ENCODE measurements at regions of chr21 and their contacts with region 1.

Region 1: GRCh38 chr21:46228345-46229051 is at the start of gene LSS:
- DNase-seq: peak; percentile 96 to 100 (median 98)
- ATAC-seq: peak; percentile 97
- H3K4me3 ChIP-seq: peak within 1 kb of the TSS; percentile 81 to 88
- H3K4me3 Mint-ChIP-seq: peak within 1 kb of the TSS; percentile 93
- H3K27ac ChIP-seq: peak within 1 kb of the TSS; percentile 55 to 58
- H3K27ac Mint-ChIP-seq: peak within 1 kb of the TSS; percentile 91
- H3K4me1 ChIP-seq: peaks cover 25% of the 10 kb centered on the region
- H3K4me1 Mint-ChIP-seq: peaks cover 49% of the 10 kb centered on the region
- H3K27me3 ChIP-seq: no peaks in the 10 kb centered on the region
- H3K27me3 Mint-ChIP-seq: no peaks in the 10 kb centered on the region
- CTCF ChIP-seq: no peak
- total RNA-seq, gene LSS: 22.5 to 22.6 TPM

Region 2: GRCh38 chr21:45973659-45974072 is 254.8 kb before region 1 on chr21:
- CTCF ChIA-PET with region 1: interaction called, 3 read pairs
- POLR2A ChIA-PET with region 1: no interaction called
- intact Hi-C with region 1: loop called in 1 of 2 experiments (anchors 2 kb)
- DNase-seq: peak; percentile 64 to 91 (median 85)
- ATAC-seq: peak; percentile 92
- H3K4me3 ChIP-seq: peak overlapping the region; percentile 64 to 87
- H3K4me3 Mint-ChIP-seq: peak overlapping the region; percentile 86
- H3K27ac ChIP-seq: peak overlapping the region in 1 of 2 experiments; percentile 40
- H3K27ac Mint-ChIP-seq: peak overlapping the region; percentile 74
- H3K4me1 ChIP-seq: peaks cover 27% of the 10 kb centered on the region
- H3K4me1 Mint-ChIP-seq: peaks cover 13% of the 10 kb centered on the region
- H3K27me3 ChIP-seq: peaks cover 0 to 36% of the 10 kb centered on the region in 2 experiments
- H3K27me3 Mint-ChIP-seq: peaks cover 19% of the 10 kb centered on the region
- CTCF ChIP-seq: peak; percentile 83

Region 3: DNA sequence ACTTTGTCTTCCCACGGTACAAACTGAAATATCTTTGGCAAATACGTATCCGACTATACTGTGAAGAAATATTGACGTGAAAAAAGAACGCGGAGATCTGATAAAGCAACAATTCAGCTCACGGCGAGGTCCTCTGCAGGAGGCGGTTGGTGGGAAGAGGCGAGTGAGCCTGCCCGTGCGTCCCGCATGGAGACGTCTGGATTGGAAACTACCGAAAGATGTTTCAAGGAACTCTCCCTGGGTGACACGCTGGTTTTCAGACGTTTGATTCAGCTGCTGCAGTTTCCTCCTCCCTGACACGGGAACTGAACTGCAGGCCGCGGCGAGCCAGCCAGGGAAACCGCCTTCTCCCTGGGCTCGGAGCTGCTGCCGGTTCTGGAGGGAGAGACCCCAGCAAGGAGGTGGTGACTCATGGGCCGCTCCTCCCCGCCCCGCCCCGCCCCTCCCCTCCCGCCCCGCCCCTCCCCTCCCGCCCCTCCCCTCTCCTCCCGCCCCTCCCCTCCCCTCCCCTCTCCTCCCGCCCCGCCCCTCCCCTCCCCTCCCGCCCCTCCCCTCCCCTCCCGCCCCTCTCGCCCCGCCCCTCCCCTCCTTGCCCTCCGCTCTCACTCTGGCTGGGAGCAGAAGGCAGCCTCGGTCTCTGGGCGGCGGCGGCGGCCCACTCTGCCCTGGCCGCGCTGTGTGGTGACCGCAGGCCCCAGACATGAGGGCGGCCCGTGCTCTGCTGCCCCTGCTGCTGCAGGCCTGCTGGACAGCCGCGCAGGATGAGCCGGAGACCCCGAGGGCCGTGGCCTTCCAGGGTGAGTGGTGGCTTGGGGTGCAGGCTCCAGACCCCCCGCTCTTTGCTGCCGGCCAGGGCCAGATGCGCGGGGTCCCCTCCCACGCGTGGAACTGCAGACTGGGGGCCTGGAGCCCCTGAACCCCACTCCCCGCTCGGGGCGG is 247.1 kb before region 1 on chr21 and contains the start of gene COL6A1:
- CTCF ChIA-PET with region 1: no interaction called
- POLR2A ChIA-PET with region 1: no interaction called
- intact Hi-C with region 1: loop called (anchors 1 to 5 kb)
- DNase-seq: peak in 8 of 9 experiments; percentile 38 to 80 (median 70)
- ATAC-seq: peak; percentile 78
- H3K4me3 ChIP-seq: peak within 1 kb of the TSS; percentile 42 to 54
- H3K4me3 Mint-ChIP-seq: peak within 1 kb of the TSS; percentile 61
- H3K27ac ChIP-seq: no peak within 1 kb of the TSS
- H3K27ac Mint-ChIP-seq: no peak within 1 kb of the TSS
- H3K4me1 ChIP-seq: peaks cover 17% of the 10 kb centered on the region
- H3K4me1 Mint-ChIP-seq: peaks cover 6% of the 10 kb centered on the region
- H3K27me3 ChIP-seq: peaks cover 0 to 11% of the 10 kb centered on the region in 2 experiments
- H3K27me3 Mint-ChIP-seq: peaks cover 3% of the 10 kb centered on the region
- CTCF ChIP-seq: no peak
- total RNA-seq, gene COL6A1: 15.2 to 16.5 TPM

Region 4: DNA sequence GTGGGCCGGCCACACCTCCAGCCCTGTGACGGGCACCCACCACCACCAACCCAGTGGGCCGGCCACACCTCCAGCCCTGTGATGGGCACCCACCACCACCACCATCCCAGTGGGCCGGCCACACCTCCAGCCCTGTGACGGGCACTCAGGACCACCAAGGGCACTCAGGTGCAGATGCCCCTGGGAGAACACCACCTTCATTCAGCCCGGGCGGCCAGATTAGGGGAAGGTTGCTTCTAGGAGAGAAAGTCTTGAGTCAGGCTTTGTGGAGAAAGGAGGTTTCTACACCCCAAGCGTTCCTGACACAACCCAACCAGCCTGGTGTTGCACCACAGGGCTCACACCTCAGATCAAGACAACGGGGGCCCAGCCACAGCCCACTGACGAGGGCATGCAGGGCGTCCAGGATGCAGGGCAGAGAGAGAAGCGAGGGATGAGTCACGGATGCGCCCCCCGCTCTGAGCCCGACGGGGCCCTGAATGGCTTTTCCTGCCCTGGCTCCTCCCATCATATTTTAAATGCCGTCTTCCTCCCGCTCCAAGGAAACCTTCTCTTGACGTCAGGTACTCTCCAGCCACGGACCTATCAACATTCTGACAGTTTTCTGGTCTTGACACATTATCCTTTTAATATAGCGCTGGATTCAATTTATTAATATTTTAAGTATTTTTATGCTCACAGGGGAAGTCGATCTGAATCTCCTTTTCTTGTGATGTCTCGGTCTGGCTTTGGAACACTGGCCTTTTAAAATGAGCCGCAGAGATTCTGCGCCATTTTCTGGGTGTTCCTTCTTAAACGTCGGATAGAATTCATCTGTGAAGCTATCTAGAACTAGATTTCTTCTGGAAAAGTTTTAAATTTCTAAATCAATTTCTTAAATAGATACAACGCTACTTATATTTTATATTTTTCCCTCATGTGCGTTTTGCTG is 43.6 kb before region 1 on chr21:
- CTCF ChIA-PET with region 1: no interaction called
- POLR2A ChIA-PET with region 1: no interaction called
- intact Hi-C with region 1: loop called (anchors 1 to 2 kb)
- DNase-seq: peak; percentile 39 to 94 (median 77)
- ATAC-seq: peak; percentile 86
- H3K4me3 ChIP-seq: peak overlapping the region; percentile 64 to 79
- H3K4me3 Mint-ChIP-seq: peak overlapping the region; percentile 86
- H3K27ac ChIP-seq: peak overlapping the region; percentile 67 to 83
- H3K27ac Mint-ChIP-seq: peak overlapping the region; percentile 91
- H3K4me1 ChIP-seq: peaks cover 9% of the 10 kb centered on the region
- H3K4me1 Mint-ChIP-seq: peaks cover 15% of the 10 kb centered on the region
- H3K27me3 ChIP-seq: no peaks in the 10 kb centered on the region
- H3K27me3 Mint-ChIP-seq: no peaks in the 10 kb centered on the region
- CTCF ChIP-seq: no peak

Region 5: GRCh38 chr21:46285761-46286496 is 57.4 kb after region 1 on chr21 and contains the start of gene YBEY:
- CTCF ChIA-PET with region 1: no interaction called
- POLR2A ChIA-PET with region 1: no interaction called
- intact Hi-C with region 1: loop called (anchors 2 kb)
- DNase-seq: peak; percentile 59 to 93 (median 84)
- ATAC-seq: peak; percentile 79
- H3K4me3 ChIP-seq: peak within 1 kb of the TSS; percentile 85 to 88
- H3K4me3 Mint-ChIP-seq: peak within 1 kb of the TSS; percentile 90
- H3K27ac ChIP-seq: peak within 1 kb of the TSS; percentile 72 to 86
- H3K27ac Mint-ChIP-seq: peak within 1 kb of the TSS; percentile 94
- H3K4me1 ChIP-seq: peaks cover 38% of the 10 kb centered on the region
- H3K4me1 Mint-ChIP-seq: peaks cover 61% of the 10 kb centered on the region
- H3K27me3 ChIP-seq: no peaks in the 10 kb centered on the region
- H3K27me3 Mint-ChIP-seq: no peaks in the 10 kb centered on the region
- CTCF ChIP-seq: peak; percentile 43
- total RNA-seq, gene YBEY: 10.8 to 13.6 TPM